GM10248 (cell line): ENCODE measurements at regions of chr20 and their contacts with region 1.

Region 1: GRCh38 chr20:32674362-32674789 is 635 bp upstream of the C20orf203 start:
- DNase-seq: peak; percentile 78
- CTCF ChIP-seq: peak; percentile 73

Region 2: GRCh38 chr20:32560989-32561830 is 113.2 kb before region 1 on chr20:
- CTCF ChIA-PET with region 1: no interaction called
- POLR2A ChIA-PET with region 1: no interaction called
- DNase-seq: no peak
- CTCF ChIP-seq: no peak

Region 3: GRCh38 chr20:32685541-32686529 is 11.5 kb after region 1 on chr20:
- CTCF ChIA-PET with region 1: interaction called, 15 read pairs
- POLR2A ChIA-PET with region 1: no interaction called
- DNase-seq: no peak
- CTCF ChIP-seq: no peak

Region 4: GRCh38 chr20:32697608-32698007 is 23.2 kb after region 1 on chr20:
- CTCF ChIA-PET with region 1: interaction called, 10 read pairs
- POLR2A ChIA-PET with region 1: no interaction called
- DNase-seq: no peak
- CTCF ChIP-seq: no peak